Dorsolateral prefrontal cortex (tissue), 120 donors: ENCODE measurements at regions of chr2 and their contacts with region 1.

Region 1: DNA sequence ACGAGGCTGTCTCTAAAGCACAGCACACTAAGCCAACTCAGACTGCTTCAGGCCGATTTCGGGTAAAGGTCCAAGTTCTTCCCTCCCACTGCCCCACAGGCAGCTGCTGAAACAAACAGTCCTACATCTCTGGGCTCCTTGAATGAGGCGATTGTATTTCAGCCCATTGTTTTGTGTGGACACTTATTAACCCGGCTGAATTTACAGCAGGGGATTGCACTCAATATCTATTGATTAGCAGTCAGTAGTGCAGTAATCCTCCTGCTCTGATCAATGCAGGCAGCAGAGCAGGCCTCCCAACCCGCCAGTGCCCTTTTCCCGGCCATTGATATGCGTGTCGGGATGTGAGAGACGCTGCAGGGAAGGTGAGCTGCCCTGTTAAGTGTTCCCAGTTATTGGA is 330.1 kb downstream of the CMPK2 start:
- DNase-seq: peak in 6 of 10 donors; percentile 35 to 71 (median 60)
- H3K4me3 ChIP-seq: peak overlapping the region in 37 of 59 donors; percentile 3 to 46 (median 27)
- H3K27ac ChIP-seq: peak overlapping the region in 16 of 59 donors; percentile 9 to 75 (median 44)
- H3K27me3 ChIP-seq: peaks cover 0 to 3% (median 0%) of the 10 kb centered on the region in 45 donors
- CTCF ChIP-seq: no peak

Region 2: GRCh38 chr2:5203134-5203740 is 1332.3 kb before region 1 on chr2:
- intact Hi-C with region 1: no loop called
- DNase-seq: no peak
- H3K4me3 ChIP-seq: no peak overlapping the region
- H3K27ac ChIP-seq: no peak overlapping the region
- H3K27me3 ChIP-seq: peaks cover 0 to 5% (median 0%) of the 10 kb centered on the region in 45 donors
- CTCF ChIP-seq: no peak

Region 3: DNA sequence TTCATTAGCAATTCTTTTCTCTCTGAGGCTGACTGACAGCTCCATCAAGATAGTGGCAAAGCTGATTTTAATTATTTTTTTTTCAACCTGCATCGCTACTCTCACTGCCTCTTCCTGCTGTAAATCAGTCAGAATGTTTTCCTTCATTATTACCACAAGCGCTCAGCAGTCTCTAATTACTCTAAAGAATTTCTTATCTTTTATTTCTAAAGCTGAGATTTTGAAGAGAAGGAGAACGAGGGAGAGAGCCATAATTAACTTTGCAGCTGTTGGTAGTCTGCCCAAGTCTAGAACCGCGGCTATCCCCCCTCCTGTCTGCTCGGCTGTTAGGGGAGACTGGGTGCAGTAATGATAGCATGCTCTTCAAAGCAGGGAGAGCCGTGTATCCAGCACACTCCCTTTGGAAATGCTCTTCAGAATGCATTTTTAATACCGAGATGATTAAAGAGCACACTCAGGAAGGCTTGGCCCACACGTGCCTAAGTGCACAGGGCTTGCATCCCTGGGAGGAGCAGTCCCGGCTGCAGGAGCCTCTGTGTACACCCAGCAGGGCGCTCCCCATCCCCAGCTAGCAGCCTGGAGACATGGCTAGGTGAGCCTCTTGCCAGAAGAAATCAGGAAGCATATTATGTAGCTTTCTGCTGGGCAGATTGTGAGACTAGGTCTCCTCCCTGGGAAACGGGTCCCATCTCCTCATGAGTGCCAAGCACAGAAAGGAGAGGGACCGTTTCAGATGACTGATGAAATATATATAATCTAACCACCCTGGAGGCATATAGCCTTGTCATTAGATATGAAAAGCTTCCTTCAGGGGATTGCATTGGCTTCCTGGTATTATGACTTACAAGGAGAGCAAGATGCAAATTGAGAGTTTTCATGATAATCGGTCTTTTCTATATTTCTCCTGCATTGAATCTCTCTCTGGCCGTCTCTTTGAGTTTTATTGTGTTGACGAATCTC is 225.0 kb before region 1 on chr2:
- intact Hi-C with region 1: no loop called
- DNase-seq: no peak
- H3K4me3 ChIP-seq: no peak overlapping the region
- H3K27ac ChIP-seq: peak overlapping the region in 1 of 59 donors; percentile 28
- H3K27me3 ChIP-seq: peaks cover 0 to 19% (median 0%) of the 10 kb centered on the region in 45 donors
- CTCF ChIP-seq: no peak

Region 4: DNA sequence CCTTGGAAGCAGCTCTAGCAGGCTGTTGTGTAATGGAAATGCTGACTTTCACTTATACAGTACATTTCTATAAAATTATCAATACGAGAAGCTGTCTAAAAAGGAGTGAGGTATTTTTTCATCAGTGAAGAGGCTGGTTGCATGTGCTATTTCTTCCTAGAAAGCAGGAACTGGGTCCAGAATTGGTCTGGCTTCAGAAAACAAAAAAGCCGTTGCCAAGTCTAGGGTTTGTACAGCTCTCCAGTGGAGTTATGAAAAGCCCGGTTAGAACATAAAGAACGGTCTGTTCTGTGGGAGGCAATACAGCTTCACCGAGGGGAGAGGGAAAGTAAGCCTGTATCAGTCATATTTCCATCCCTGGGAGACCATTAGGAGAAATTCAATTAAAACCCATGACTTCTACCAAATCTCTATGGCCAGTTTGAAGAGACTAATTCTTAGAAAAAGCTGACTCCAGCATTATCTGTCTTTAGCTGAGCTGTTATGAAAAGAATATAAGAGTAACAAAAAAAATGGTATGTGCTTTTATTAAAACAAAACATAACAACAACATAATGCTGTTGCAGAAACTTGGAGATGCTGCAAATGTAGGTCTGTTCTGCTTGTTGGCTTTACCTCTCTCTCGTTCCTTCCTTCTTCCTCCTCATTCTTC is 113.2 kb after region 1 on chr2:
- intact Hi-C with region 1: loop called in 1 of 2 experiments (anchors 5 kb)
- DNase-seq: peak in 1 of 10 donors; percentile 31
- H3K4me3 ChIP-seq: no peak overlapping the region
- H3K27ac ChIP-seq: no peak overlapping the region
- H3K27me3 ChIP-seq: peaks cover 0 to 67% (median 10%) of the 10 kb centered on the region in 45 donors
- CTCF ChIP-seq: peak in 1 of 56 donors; percentile 12